ENCODE measurements at regions of chr1 and their contacts with region 1.

Region 1: GRCh38 chr1:93846211-93846991 is 32.6 kb downstream of the DNTTIP2 start:
- DNase-seq: peak; percentile 79
- H3K4me3 Mint-ChIP-seq: peak overlapping the region; percentile 83
- H3K27ac Mint-ChIP-seq: peak overlapping the region; percentile 83
- H3K4me1 Mint-ChIP-seq: peaks cover 23% of the 10 kb centered on the region
- H3K27me3 Mint-ChIP-seq: no peaks in the 10 kb centered on the region

Region 2: DNA sequence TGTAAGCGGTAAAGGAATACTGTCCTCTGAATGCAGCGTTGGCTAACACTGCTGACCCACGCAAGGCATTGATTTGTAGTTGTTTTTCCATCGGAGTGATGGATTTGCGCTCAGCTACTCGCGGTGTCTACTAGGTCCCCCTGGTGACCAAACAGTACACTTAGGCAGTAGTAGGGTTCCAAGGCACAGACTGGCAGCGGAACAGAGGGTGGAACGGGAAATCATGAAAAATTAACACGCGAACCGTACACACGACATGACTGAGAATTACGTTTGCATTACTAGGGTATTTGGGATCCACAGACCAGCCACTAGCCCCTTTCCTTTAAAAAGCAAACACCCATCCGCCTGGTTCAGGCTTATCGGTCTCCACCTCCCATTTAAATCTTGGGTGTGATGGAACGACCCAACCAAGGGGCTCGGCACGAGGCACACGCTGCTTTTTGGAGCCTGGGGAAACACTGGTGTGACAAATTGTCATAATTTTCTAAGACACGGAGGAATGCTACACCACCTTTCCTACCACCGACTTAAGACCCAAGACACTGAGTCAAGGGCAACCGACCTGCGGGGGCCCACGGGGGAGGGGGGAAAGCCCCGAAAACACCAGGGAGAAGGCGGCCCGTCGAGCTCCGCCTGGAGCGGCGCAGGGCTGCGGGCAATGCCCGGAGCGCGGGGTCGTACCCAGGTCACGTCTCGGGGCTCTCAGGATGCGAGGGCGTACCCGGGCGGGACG is 885.8 kb before region 1 on chr1:
- intact Hi-C with region 1: loop called (anchors 5 kb)
- DNase-seq: peak; percentile 64
- H3K4me3 Mint-ChIP-seq: peak overlapping the region; percentile 91
- H3K27ac Mint-ChIP-seq: peak overlapping the region; percentile 96
- H3K4me1 Mint-ChIP-seq: peaks cover 37% of the 10 kb centered on the region
- H3K27me3 Mint-ChIP-seq: no peaks in the 10 kb centered on the region

Region 3: DNA sequence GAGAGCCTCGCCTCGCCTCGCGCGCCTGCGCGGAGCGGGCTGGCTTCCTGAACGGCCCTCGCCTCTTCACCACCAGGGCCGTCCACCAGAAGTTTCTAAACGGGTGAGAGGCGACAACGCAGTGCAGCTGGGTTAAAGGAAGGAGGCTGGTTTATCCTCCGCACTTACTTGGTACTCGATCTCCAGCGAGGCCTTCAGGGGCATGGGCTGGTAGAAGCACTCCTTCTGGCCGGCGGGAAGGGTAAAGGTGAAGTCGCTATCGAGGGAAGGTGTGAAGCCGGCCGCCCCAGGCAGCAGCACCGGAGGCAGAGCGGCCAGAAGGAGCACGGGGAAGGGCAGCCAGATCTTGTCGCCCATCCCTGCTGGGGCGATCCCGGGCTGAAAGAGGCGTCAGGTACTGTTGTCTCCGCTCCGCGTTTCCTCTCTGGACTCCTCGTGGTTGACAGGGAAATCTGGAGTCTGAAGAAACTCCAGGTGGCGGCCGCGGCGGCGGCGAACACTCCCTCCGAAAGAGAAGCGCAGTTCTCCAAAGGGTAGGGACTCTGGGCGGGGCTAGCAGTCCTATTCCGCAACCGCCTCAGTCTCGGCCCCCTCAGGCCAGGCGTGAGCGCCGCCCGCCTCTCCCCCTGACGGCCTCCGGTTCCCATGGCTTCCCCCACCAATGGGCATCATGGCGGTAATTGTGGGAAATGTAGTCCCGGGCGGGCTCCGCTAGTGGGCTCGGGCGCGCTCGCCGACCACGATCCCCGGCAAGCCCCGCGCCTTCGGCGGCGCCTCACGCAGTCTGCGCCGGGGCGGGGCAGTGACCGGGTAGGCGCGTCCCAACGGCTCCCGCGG is 666.3 kb before region 1 on chr1 and contains the start of gene TMED5:
- intact Hi-C with region 1: loop called (anchors 1 kb)
- DNase-seq: peak; percentile 97
- H3K4me3 Mint-ChIP-seq: peak within 1 kb of the TSS; percentile 97
- H3K27ac Mint-ChIP-seq: peak within 1 kb of the TSS; percentile 99
- H3K4me1 Mint-ChIP-seq: peaks cover 52% of the 10 kb centered on the region
- H3K27me3 Mint-ChIP-seq: no peaks in the 10 kb centered on the region
- total RNA-seq, gene TMED5: 58.6 and 60.4 TPM in 2 replicates

Region 4: DNA sequence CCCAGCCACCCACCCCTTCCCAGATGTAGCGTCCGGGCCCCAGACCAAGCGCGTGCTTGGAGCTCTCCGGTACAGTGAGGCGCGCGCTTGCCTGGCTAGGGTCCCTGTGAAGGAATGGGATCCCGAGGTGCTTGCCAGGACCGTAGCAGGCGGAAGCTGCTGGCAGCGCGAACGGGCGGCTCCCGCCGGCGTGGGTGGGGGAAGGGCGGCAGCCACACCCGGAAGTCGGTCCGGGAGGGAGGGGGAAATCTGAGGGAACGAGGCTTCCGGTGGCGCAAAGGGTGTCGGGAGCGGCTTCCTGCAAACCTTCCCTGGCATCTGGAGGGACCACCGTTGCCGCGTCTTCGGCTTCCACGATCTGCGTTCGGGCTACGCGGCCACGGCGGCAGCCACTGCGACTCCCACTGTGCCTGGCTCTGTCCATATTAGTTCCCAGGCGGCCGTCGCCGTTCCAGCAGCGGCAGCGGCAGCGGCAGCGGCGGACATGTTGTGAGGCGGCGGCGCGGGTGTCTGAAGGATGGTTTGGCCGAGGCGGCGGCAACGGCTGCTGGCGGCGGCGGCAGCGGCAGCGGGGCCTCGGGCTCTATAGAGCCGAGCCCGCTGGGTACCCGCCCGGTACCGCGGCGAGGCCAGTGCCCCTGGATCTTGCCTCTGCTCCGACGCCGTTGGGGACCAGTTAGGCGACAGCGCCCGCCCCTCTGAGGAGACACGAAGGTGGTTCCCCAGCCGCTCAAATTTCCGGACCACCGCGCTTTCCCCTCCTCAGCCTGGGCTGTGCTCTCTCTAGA is 500.6 kb before region 1 on chr1 and contains the start of gene DR1:
- intact Hi-C with region 1: loop called (anchors 1 kb)
- DNase-seq: peak; percentile 88
- H3K4me3 Mint-ChIP-seq: peak within 1 kb of the TSS; percentile 88
- H3K27ac Mint-ChIP-seq: peak within 1 kb of the TSS; percentile 98
- H3K4me1 Mint-ChIP-seq: peaks cover 24% of the 10 kb centered on the region
- H3K27me3 Mint-ChIP-seq: no peaks in the 10 kb centered on the region
- total RNA-seq, gene DR1: 103 and 104 TPM in 2 replicates

Region 5: DNA sequence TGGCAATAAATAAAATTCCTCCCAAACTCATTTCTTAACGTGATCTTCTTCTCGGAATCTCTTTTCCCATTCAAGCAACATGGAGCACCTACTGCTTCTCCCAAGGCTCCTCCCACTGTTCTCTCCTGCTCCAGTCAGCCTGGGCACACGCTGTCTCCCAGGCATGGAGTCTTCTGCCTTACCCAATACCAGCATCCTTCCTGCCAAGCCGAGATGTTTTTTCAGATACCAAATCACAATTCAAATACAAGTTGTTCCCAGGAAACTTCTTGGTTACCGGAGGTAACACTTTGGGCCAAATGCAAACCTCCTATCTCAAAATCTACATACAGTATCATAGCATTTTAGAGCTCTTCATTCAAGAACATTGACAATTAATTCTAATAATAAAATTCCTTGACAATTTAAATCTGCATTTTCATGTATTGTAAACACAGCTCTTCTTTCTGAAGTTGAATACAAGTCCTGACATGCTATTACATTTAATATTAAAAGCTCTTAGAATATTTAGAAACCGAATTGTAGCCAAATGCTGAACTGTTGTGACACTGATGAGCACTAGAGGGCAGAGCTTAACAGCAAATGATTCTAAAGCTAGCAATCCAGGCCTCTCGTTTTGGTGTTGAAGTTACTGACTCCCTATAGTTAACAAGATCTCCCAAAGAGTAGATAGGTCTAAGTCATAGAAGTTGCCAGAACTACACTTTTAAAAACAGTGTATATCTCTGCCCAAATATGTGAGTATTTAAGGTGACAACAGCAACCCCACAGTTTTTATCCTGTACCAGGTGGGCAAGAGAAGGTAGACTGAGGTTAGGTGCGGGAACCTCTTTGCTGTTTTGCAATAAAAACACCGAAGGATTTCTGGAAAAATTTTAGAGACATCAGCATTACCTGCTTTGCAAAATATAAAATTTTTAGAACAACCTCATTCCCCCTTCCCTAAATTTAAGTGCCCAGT is 217.0 kb before region 1 on chr1:
- intact Hi-C with region 1: loop called (anchors 1 kb)
- DNase-seq: peak; percentile 29
- H3K4me3 Mint-ChIP-seq: no peak overlapping the region
- H3K27ac Mint-ChIP-seq: no peak overlapping the region
- H3K4me1 Mint-ChIP-seq: peaks cover 12% of the 10 kb centered on the region
- H3K27me3 Mint-ChIP-seq: no peaks in the 10 kb centered on the region

Region 6: GRCh38 chr1:93814059-93814794 is 32.2 kb before region 1 on chr1:
- intact Hi-C with region 1: loop called (anchors 2 kb)
- DNase-seq: peak; percentile 53
- H3K4me3 Mint-ChIP-seq: no peak overlapping the region
- H3K27ac Mint-ChIP-seq: no peak overlapping the region
- H3K4me1 Mint-ChIP-seq: peaks cover 38% of the 10 kb centered on the region
- H3K27me3 Mint-ChIP-seq: no peaks in the 10 kb centered on the region

Region 7: DNA sequence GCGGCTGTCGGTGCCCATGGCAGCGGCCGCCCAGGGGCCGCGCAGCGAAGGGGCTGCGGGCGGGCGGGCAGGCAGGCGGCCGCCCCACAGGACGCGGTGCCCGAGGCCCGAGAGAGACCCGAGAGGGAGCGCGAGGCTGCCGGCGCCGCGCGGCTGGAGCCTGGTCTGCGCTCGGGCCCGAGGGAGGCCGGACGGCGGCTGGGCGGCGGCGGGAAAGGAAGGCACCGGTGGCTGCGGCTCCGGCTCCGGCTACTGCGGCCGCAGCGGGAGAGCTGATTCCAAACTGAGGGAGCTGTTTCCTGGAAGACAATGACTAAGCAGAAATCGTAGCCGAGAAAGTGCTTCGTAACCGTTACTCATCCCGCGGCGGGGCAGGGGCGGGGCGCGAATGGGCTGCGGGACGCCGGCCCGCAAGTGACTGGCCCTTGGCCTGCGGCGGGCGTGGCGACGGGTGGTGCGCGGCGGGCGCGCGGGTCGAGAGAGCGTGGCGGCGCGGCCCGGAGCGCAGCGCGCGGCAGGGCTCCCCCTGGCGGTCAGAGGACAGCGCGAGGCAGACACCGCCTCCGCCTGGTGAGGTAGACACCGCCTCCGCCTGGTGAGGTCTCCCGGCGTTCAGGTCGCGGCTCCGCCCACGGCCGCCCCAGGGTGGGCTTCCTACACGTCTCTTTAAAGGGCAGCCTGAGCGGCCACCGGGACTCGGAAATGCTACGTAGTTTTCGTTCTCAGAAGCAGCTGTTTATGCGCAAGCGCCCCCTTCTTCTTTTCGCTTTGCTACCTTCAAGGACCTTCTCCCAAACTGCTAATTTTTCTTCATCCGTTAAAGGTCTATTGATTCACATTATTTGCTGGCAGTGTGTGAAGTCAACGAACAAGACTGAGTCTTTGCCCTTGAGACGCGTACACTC is 63.0 kb after region 1 on chr1 and contains the start of gene GCLM:
- intact Hi-C with region 1: loop called (anchors 1 kb)
- DNase-seq: peak; percentile 86
- H3K4me3 Mint-ChIP-seq: peak within 1 kb of the TSS; percentile 97
- H3K27ac Mint-ChIP-seq: peak within 1 kb of the TSS; percentile 86
- H3K4me1 Mint-ChIP-seq: peaks cover 30% of the 10 kb centered on the region
- H3K27me3 Mint-ChIP-seq: peaks cover 20% of the 10 kb centered on the region
- total RNA-seq, gene GCLM: 18.1 and 20.5 TPM in 2 replicates

Measured in activated T-helper 2 cell treated with anti-CD3 and anti-CD28 coated beads, Interferon-gamma antibody, Interleukin-2, Interleukin-4, amounts not matched to agents 10 μg/mL and 5 μg/mL and 100 μg/mL, durations not matched to agents 14 hours and 24 hours and 36 hours (primary cell).